Dendritic cell treated with granulocyte-macrophage colony-stimulating factor and Interleukin-4, amounts not matched to agents 40 ng/mL and 50 ng/mL, for 4 days (primary cell): ENCODE measurements at regions of chr1 and their contacts with region 1.

Region 1: DNA sequence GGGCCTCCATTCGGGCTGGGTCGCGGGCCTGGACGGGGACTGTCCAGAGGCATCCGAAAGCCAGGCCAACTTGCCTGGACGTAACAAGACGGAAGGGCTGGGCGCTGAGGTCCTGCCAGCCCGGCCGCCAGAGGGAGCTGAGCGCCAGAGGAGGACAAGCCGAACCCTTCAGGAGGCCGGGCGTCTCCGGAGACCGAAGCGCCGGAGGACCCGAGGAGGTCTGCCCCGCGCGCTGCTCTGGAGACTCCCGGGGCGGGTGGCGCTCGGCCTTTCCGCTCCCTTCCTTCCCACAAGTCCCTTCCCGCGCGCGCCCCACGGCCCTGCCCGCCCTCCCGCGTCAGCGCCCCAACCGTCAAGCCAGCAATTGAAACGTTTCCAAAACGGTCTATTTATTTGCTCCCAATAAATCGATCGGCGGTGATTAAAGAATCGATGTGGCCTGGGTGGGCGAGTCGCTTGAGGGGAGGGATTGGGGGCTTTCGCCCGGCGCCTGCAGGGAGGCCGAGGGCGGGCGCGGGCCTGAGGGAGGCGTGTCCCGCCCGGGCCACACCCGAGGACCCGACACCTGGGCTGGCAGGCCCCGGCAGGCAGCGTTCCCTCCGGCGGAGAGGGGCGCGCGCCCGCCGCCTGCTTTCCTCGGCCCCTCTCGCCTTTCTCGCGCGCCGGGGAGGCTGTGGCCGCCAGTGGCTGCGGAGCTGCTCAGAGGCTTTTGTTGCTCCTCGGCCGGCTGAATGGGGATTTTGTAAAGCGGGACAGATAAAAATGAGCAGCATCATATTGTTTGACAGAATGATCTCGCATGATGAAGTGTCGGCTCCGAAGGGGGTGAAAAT is 5.2 kb upstream of the FOXD3 start:
- H3K4me3 Mint-ChIP-seq: peak overlapping the region; percentile 71
- H3K27ac Mint-ChIP-seq: no peak overlapping the region
- H3K4me1 Mint-ChIP-seq: peaks cover 53% of the 10 kb centered on the region
- H3K27me3 Mint-ChIP-seq: peaks cover 88% of the 10 kb centered on the region

Region 2: DNA sequence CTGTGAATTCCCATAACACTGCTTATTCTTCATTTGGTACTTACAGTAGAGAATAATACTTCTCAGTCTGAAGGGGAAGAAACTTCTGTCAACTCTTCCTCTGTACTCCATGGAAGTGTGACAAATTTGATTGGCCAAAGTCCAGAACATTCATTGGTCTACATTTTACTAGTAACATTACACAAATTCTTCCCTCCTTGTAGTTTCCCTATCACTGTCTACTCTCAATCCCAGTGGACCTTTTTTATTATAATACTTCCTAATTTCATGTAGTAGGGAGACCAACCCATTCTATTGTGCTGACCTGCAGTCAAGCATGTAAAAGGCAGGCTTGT is 124.9 kb after region 1 on chr1:
- intact Hi-C with region 1: loop called (anchors 1 kb)
- H3K4me3 Mint-ChIP-seq: no peak overlapping the region
- H3K27ac Mint-ChIP-seq: no peak overlapping the region
- H3K4me1 Mint-ChIP-seq: no peaks in the 10 kb centered on the region
- H3K27me3 Mint-ChIP-seq: no peaks in the 10 kb centered on the region

Region 3: GRCh38 chr1:63585225-63585624 is 268.0 kb after region 1 on chr1:
- intact Hi-C with region 1: no loop called
- H3K4me3 Mint-ChIP-seq: no peak overlapping the region
- H3K27ac Mint-ChIP-seq: no peak overlapping the region
- H3K4me1 Mint-ChIP-seq: no peaks in the 10 kb centered on the region
- H3K27me3 Mint-ChIP-seq: no peaks in the 10 kb centered on the region